PC-3 (cell line): ENCODE measurements at regions of chr12 and their contacts with region 1.

Region 1: GRCh38 chr12:77102691-77103090 is 37.3 kb upstream of the E2F7 start:
- DNase-seq: peak; percentile 81
- ATAC-seq: peak; percentile 92
- H3K4me3 ChIP-seq: no peak overlapping the region
- H3K27ac ChIP-seq: no peak overlapping the region
- H3K4me1 ChIP-seq: peaks cover 20% of the 10 kb centered on the region
- H3K27me3 ChIP-seq: no peaks in the 10 kb centered on the region
- CTCF ChIP-seq: no peak

Region 2: GRCh38 chr12:76920172-76921014 is 182.3 kb before region 1 on chr12:
- CTCF ChIA-PET with region 1: interaction called, 15 read pairs
- POLR2A ChIA-PET with region 1: no interaction called
- intact Hi-C with region 1: no loop called
- DNase-seq: no peak
- ATAC-seq: no peak
- H3K4me3 ChIP-seq: no peak overlapping the region
- H3K27ac ChIP-seq: no peak overlapping the region
- H3K4me1 ChIP-seq: peaks cover 11% of the 10 kb centered on the region; the same call in 1 of the 2 replicates
- H3K27me3 ChIP-seq: peaks cover 7% of the 10 kb centered on the region; the same call in 1 of the 2 replicates
- CTCF ChIP-seq: no peak

Region 3: GRCh38 chr12:77122236-77122635 is 19.5 kb after region 1 on chr12:
- CTCF ChIA-PET with region 1: no interaction called
- POLR2A ChIA-PET with region 1: no interaction called
- intact Hi-C with region 1: loop called (anchors 2 kb)
- DNase-seq: peak; percentile 90
- ATAC-seq: peak; percentile 86
- H3K4me3 ChIP-seq: peak overlapping the region; percentile 16; the same call in 1 of the 2 replicates
- H3K27ac ChIP-seq: peak overlapping the region; percentile 94
- H3K4me1 ChIP-seq: peaks cover 44% of the 10 kb centered on the region
- H3K27me3 ChIP-seq: no peaks in the 10 kb centered on the region
- CTCF ChIP-seq: no peak